ENCODE measurements at regions of chr10 and their contacts with region 1.

Region 1: GRCh38 chr10:11178606-11179515 is 161.2 kb downstream of the CELF2 start:
- DNase-seq: peak in 5 of 10 donors; percentile 48 to 78 (median 66)
- H3K4me3 ChIP-seq: peak overlapping the region in 16 of 59 donors; percentile 1 to 41 (median 22)
- H3K27ac ChIP-seq: peak overlapping the region in 55 of 59 donors; percentile 26 to 90 (median 73)
- H3K27me3 ChIP-seq: peaks cover 0 to 29% (median 0%) of the 10 kb centered on the region in 45 donors
- CTCF ChIP-seq: no peak

Region 2: GRCh38 chr10:11074536-11075267 is 104.2 kb before region 1 on chr10:
- intact Hi-C with region 1: no loop called
- DNase-seq: no peak
- H3K4me3 ChIP-seq: no peak overlapping the region
- H3K27ac ChIP-seq: no peak overlapping the region
- H3K27me3 ChIP-seq: peaks cover 0 to 33% (median 0%) of the 10 kb centered on the region in 45 donors
- CTCF ChIP-seq: no peak

Region 3: GRCh38 chr10:11260170-11260569 is 81.3 kb after region 1 on chr10:
- intact Hi-C with region 1: loop called in 1 of 2 experiments (anchors 10 kb)
- DNase-seq: peak in 1 of 10 donors; percentile 60
- H3K4me3 ChIP-seq: no peak overlapping the region
- H3K27ac ChIP-seq: peak overlapping the region in 36 of 59 donors; percentile 1 to 75 (median 42)
- H3K27me3 ChIP-seq: peaks cover 0 to 32% (median 0%) of the 10 kb centered on the region in 45 donors
- CTCF ChIP-seq: no peak